WTC11 (cell line): ENCODE measurements at regions of chr20 and their contacts with region 1.

Region 1: GRCh38 chr20:2729251-2729713 is 36.7 kb downstream of the EBF4 start:
- DNase-seq: no peak
- ATAC-seq: peak; percentile 57
- H3K4me3 Mint-ChIP-seq: no peak overlapping the region
- H3K27ac Mint-ChIP-seq: no peak overlapping the region
- H3K4me1 Mint-ChIP-seq: peaks cover 5% of the 10 kb centered on the region
- H3K27me3 Mint-ChIP-seq: peaks cover 46% of the 10 kb centered on the region
- CTCF ChIP-seq: no peak

Region 2: DNA sequence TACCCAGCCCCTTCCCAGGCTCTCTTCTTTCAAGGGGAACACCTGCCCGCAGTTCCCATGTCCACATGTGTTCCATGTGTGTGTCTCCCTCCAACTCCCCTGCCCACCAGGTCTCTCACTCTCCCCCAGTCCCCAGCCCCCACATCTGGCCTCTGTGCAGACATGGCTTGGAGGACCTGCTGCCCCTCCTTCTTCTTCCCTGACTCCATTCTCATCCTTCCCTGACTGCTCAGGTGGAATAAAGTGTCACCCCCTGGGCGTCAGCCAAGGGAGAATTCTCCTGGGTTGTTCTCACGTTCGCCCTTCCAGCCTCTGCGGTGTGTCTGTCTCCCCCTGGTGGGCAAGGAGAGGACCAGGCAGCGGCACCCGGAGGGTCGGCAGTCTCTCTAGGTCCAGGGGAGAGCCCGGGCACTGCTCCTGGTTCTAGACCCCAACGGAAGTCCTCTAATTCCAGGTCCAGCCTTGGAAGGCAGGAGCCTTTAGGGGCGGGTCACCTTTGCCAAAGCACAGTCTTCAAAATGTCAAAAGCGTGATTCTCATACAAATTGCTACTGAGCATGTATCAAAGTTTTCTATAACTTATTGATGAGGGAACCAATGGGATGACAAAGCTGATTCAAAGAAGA is 13.8 kb after region 1 on chr20:
- CTCF ChIA-PET with region 1: interaction called, 10 read pairs
- POLR2A ChIA-PET with region 1: no interaction called
- DNase-seq: peak; percentile 82
- ATAC-seq: peak; percentile 91
- H3K4me3 Mint-ChIP-seq: no peak overlapping the region
- H3K27ac Mint-ChIP-seq: no peak overlapping the region
- H3K4me1 Mint-ChIP-seq: peaks cover 26% of the 10 kb centered on the region
- H3K27me3 Mint-ChIP-seq: peaks cover 73% of the 10 kb centered on the region
- CTCF ChIP-seq: peak; percentile 75

Region 3: GRCh38 chr20:2967841-2968240 is 238.6 kb after region 1 on chr20:
- CTCF ChIA-PET with region 1: no interaction called
- POLR2A ChIA-PET with region 1: no interaction called
- DNase-seq: no peak
- ATAC-seq: no peak
- H3K4me3 Mint-ChIP-seq: no peak overlapping the region
- H3K27ac Mint-ChIP-seq: no peak overlapping the region
- H3K4me1 Mint-ChIP-seq: no peaks in the 10 kb centered on the region
- H3K27me3 Mint-ChIP-seq: no peaks in the 10 kb centered on the region
- CTCF ChIP-seq: no peak